Ascending aorta (tissue), 2 donors: ENCODE measurements at regions of chr5 and their contacts with region 1.

Region 1: GRCh38 chr5:42514754-42515153 is 91.5 kb downstream of the GHR start:
- DNase-seq: no peak
- H3K4me3 ChIP-seq: no peak overlapping the region
- H3K27ac ChIP-seq: no peak overlapping the region
- H3K4me1 ChIP-seq: peaks cover 0 to 5% of the 10 kb centered on the region in 2 donors
- H3K27me3 ChIP-seq: no peaks in the 10 kb centered on the region
- CTCF ChIP-seq: no peak

Region 2: GRCh38 chr5:42564689-42565356 is 50.1 kb after region 1 on chr5:
- intact Hi-C with region 1: loop called (anchors 5 kb)
- DNase-seq: no peak
- H3K4me3 ChIP-seq: peak overlapping the region in 1 of 2 donors; percentile 20
- H3K27ac ChIP-seq: peak overlapping the region; percentile 66 to 76
- H3K4me1 ChIP-seq: peaks cover 0 to 30% of the 10 kb centered on the region in 2 donors
- H3K27me3 ChIP-seq: no peaks in the 10 kb centered on the region
- CTCF ChIP-seq: no peak